ENCODE measurements at regions of chr19 and their contacts with region 1.

Region 1: DNA sequence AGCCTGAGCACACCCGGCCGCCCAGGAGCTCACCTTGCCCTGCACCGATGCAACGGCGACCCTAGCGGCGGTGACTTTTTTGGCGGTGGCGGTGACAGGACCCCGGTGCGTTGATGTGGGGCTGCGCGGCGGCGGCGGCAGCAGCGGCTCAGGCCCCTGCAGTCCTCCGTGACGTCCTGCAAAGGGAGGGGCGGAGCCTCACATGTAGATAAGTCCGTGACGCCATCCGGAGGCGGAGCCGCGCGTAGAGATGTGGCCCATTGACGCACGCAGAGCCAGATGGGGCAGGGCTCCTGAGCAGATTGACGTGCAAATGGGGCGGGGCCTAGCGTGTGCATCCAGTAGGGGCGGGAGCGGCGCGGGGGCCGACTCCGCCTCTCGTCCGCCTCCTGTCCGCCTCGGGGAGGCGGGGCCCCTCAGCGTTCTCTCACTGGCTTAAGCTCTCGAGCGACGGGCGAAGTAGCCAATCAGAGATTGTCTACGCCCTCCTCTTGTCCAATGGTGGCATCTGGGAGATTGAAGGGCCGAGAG is at the start of gene RAB3A:
- DNase-seq: peak; percentile 97

Region 2: GRCh38 chr19:18192673-18193387 is 11.1 kb before region 1 on chr19 and contains the start of gene MPV17L2:
- CTCF ChIA-PET with region 1: interaction called, 3 read pairs
- POLR2A ChIA-PET with region 1: interaction called, 14 read pairs
- DNase-seq: peak; percentile 89

Region 3: GRCh38 chr19:18224525-18225354 is 20.8 kb after region 1 on chr19:
- CTCF ChIA-PET with region 1: interaction called, 8 read pairs
- POLR2A ChIA-PET with region 1: interaction called, 22 read pairs
- DNase-seq: peak; percentile 98

Region 4: DNA sequence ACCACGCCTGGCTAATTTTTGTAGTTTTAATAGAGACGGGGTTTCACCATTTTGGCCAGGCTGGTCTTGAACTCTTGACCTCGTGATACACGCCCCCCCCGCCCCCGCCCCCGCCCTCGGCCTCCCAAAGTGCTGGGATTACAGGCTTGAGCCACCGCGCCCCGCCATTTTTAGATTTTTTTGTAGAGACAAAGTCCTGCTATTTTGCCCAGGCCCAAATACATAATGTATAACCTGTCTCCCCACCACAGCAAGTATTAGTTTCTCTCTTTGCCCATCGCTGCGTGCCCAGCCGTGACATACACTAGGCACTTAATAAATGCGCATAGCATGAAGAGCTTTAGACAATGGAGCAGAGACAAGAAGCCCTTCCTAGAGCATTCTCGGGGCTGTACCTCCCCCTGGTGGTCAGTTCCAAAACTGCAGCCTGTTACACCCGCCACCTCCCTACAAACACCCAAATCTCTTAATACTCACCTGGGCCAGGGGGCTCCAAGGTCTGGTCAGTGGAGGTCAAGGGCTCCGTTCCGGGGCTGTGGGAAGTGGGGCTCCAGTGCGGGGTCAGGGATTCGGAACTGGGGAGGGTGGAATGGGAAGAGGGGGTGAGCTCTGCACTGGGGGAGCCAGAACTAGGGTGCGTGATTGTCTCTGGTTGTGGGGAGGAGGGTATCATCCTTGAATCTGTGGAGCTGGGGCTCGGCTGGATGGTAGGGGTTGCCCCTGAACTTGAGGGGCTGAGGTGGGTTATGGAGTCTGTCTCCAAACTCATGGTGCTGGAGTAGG is 47.9 kb after region 1 on chr19:
- CTCF ChIA-PET with region 1: interaction called, 30 read pairs
- POLR2A ChIA-PET with region 1: interaction called, 3 read pairs
- DNase-seq: peak; percentile 82

Region 5: GRCh38 chr19:18291590-18292461 is 87.9 kb after region 1 on chr19:
- CTCF ChIA-PET with region 1: no interaction called
- POLR2A ChIA-PET with region 1: no interaction called
- DNase-seq: peak; percentile 70

Region 6: GRCh38 chr19:18349524-18350128 is 145.7 kb after region 1 on chr19:
- CTCF ChIA-PET with region 1: no interaction called
- POLR2A ChIA-PET with region 1: no interaction called
- DNase-seq: peak; percentile 69

Measured in HEK293T (cell line).